ENCODE measurements at regions of chr21 and their contacts with region 1.

Region 1: DNA sequence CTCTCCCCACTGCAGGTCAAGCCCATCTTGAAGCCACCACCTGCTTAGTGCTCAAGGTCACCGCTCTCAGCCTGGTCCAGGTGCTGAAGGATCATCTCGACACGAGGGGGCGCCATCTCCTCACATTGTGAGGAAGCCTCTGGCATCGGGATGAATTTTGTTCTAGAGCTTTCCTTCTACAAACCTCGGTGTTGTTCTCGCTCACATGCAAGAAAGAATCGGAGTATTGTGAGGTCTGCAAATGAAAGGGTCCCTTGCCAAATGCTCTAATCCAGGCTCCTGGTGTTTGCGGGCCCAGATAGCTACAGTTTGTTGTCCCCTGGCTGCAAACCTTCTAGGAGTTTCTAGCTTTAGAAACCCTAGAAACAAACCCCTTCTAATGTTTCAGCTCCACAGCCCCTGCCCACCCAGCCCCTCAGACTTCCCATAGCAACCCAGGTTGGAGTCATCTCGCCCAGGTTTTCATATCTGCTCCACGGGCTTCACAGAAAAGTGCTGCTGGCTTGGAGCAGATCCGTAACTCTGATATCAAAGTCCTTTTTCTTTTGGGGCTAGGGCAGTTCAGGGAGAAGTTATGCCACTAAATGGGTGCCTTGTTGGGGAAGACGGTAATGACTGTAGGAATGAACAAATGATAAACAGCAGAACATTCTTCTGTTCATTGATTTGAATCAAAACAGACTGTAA is 8.6 kb upstream of the ATP5PO start:
- DNase-seq: peak; percentile 93
- H3K4me3 Mint-ChIP-seq: no peak overlapping the region
- H3K27ac Mint-ChIP-seq: peak overlapping the region; percentile 4
- H3K4me1 Mint-ChIP-seq: peaks cover 13% of the 10 kb centered on the region
- H3K27me3 Mint-ChIP-seq: peaks cover 10% of the 10 kb centered on the region

Region 2: DNA sequence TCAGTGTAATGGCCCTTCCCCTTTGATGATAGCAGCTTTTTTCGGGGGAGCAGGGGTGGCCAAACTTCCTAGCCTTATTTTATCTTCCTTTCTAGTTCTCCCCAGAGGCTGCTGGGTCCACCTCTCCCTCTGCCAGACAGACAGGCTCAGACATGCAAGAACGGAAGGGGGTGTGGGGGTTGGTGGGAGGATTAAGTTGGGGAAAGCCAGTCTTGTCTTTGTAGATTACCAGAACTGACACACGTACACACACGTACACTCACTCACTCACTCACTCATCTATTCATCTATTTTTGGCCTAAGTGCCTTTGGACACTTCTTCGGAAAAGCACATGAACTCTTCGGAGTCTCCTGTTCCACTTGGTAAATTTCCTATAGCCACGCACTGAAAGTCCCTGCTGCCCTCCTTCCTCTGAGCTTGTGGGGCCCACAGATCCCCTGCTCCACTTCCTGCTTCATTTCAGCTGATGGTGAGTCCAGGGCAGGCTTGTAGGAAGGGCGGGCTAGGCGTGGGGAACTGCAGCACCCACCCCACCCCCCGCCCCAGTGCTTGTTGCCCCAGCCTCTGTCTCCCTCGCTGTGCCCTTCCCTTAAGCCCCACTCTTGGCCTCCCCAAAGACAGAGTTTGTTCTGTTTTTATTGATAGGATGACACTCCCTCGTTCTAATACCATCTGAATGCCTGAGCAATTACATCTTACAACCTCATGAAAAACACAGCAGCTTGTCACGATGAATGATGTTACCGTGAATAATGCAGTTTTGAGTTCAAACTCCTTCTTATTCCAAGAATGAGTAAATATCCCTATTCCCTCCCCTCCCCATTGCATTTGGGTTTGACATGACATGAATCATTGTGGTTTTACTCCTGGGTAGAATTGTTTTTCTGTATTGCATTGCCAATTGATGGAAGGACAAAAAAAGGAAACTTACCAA is 52.1 kb after region 1 on chr21:
- CTCF ChIA-PET with region 1: interaction called, 17 read pairs
- DNase-seq: peak; percentile 60
- H3K4me3 Mint-ChIP-seq: peak overlapping the region; percentile 37
- H3K27ac Mint-ChIP-seq: peak overlapping the region; percentile 88
- H3K4me1 Mint-ChIP-seq: peaks cover 57% of the 10 kb centered on the region
- H3K27me3 Mint-ChIP-seq: no peaks in the 10 kb centered on the region

Region 3: GRCh38 chr21:34091607-34092006 is 167.4 kb after region 1 on chr21:
- CTCF ChIA-PET with region 1: interaction called, 19 read pairs
- DNase-seq: no peak
- H3K4me3 Mint-ChIP-seq: no peak overlapping the region
- H3K27ac Mint-ChIP-seq: no peak overlapping the region
- H3K4me1 Mint-ChIP-seq: peaks cover 45% of the 10 kb centered on the region
- H3K27me3 Mint-ChIP-seq: no peaks in the 10 kb centered on the region

Region 4: GRCh38 chr21:34202553-34203372 is 278.5 kb after region 1 on chr21:
- CTCF ChIA-PET with region 1: interaction called, 17 read pairs
- DNase-seq: no peak
- H3K4me3 Mint-ChIP-seq: peak overlapping the region; percentile 45
- H3K27ac Mint-ChIP-seq: no peak overlapping the region
- H3K4me1 Mint-ChIP-seq: peaks cover 46% of the 10 kb centered on the region
- H3K27me3 Mint-ChIP-seq: peaks cover 9% of the 10 kb centered on the region

Region 5: GRCh38 chr21:34243562-34243961 is 319.3 kb after region 1 on chr21:
- CTCF ChIA-PET with region 1: interaction called, 17 read pairs
- DNase-seq: peak; percentile 42
- H3K4me3 Mint-ChIP-seq: no peak overlapping the region
- H3K27ac Mint-ChIP-seq: no peak overlapping the region
- H3K4me1 Mint-ChIP-seq: no peaks in the 10 kb centered on the region
- H3K27me3 Mint-ChIP-seq: peaks cover 8% of the 10 kb centered on the region

Region 6: GRCh38 chr21:34351786-34352241 is 427.6 kb after region 1 on chr21:
- CTCF ChIA-PET with region 1: interaction called, 153 read pairs
- DNase-seq: peak; percentile 28
- H3K4me3 Mint-ChIP-seq: no peak overlapping the region
- H3K27ac Mint-ChIP-seq: no peak overlapping the region
- H3K4me1 Mint-ChIP-seq: peaks cover 9% of the 10 kb centered on the region
- H3K27me3 Mint-ChIP-seq: peaks cover 47% of the 10 kb centered on the region